ENCODE measurements at regions of chr9 and their contacts with region 1.

Region 1: GRCh38 chr9:35732122-35732799 is at the starts of genes CREB3 and TLN1:
- DNase-seq: peak; percentile 98
- ATAC-seq: peak; percentile 87
- H3K4me3 ChIP-seq: peak within 1 kb of the TSS; percentile 52 to 87 (median 82)
- H3K4me3 Mint-ChIP-seq: no peak within 1 kb of the TSS
- H3K27ac ChIP-seq: peak within 1 kb of the TSS; percentile 69 to 92
- H3K27ac Mint-ChIP-seq: peak within 1 kb of the TSS; percentile 96
- H3K4me1 ChIP-seq: peaks cover 53 to 61% of the 10 kb centered on the region in 2 donors
- H3K4me1 Mint-ChIP-seq: peaks cover 12% of the 10 kb centered on the region
- H3K27me3 ChIP-seq: no peaks in the 10 kb centered on the region
- H3K27me3 Mint-ChIP-seq: no peaks in the 10 kb centered on the region
- CTCF ChIP-seq: no peak
- total RNA-seq, gene CREB3: 18.1 and 20.7 TPM in 2 replicates
- total RNA-seq, gene TLN1: 272 and 280 TPM in 2 replicates

Region 2: DNA sequence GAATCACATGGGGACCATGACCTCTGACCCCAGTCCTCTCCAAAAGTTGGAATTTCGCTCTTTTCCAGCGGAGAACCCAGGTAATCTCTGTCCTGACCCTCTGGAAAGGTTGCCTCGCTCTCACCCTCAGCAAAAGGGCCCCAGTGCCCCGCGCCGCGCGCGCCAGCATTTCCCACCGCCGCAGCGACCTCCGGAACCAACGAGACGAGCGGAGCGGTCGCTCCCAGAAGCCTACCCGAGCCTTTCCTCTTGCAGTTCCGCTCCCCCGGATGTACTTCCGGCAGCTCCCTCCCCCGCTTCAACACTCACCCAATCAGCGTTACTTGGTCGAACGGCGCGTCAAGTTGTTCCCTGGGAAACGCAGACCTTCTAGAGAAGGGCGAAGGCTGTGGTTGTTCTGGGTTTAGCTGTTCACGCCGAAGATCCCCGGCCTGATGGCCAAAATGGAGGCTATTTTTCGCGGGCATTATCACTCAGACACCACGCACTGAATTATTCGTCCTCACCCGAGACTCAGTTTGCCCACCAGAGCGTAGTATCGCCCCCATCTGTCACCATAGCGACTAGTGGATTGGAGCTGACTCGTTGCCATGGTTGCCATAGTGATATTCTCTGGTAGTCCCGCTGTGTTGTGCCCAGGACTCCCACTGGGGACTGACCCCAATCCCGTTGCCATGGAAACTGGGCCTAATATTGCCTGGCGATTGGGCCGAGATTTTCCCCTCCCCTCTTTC is 629.2 kb before region 1 on chr9 and contains the start of gene STOML2:
- CTCF ChIA-PET with region 1: no interaction called
- POLR2A ChIA-PET with region 1: interaction called, 6 read pairs
- intact Hi-C with region 1: loop called (anchors 2 kb)
- DNase-seq: peak; percentile 95
- ATAC-seq: peak; percentile 95
- H3K4me3 ChIP-seq: peak within 1 kb of the TSS; percentile 61 to 94 (median 88)
- H3K4me3 Mint-ChIP-seq: peak within 1 kb of the TSS; percentile 86
- H3K27ac ChIP-seq: peak within 1 kb of the TSS; percentile 86 to 96
- H3K27ac Mint-ChIP-seq: peak within 1 kb of the TSS; percentile 97
- H3K4me1 ChIP-seq: peaks cover 13 to 22% of the 10 kb centered on the region in 2 donors
- H3K4me1 Mint-ChIP-seq: peaks cover 28% of the 10 kb centered on the region
- H3K27me3 ChIP-seq: no peaks in the 10 kb centered on the region
- H3K27me3 Mint-ChIP-seq: no peaks in the 10 kb centered on the region
- CTCF ChIP-seq: no peak
- total RNA-seq, gene STOML2: 52.1 and 58.9 TPM in 2 replicates

Region 3: GRCh38 chr9:35495984-35496383 is 236.3 kb before region 1 on chr9:
- CTCF ChIA-PET with region 1: no interaction called
- POLR2A ChIA-PET with region 1: no interaction called
- intact Hi-C with region 1: no loop called
- DNase-seq: no peak
- ATAC-seq: no peak
- H3K4me3 ChIP-seq: no peak overlapping the region
- H3K4me3 Mint-ChIP-seq: no peak overlapping the region
- H3K27ac ChIP-seq: no peak overlapping the region
- H3K27ac Mint-ChIP-seq: no peak overlapping the region
- H3K4me1 ChIP-seq: no peaks in the 10 kb centered on the region
- H3K4me1 Mint-ChIP-seq: peaks cover 2% of the 10 kb centered on the region
- H3K27me3 ChIP-seq: peaks cover 0 to 8% (median under 1%) of the 10 kb centered on the region in 4 experiments
- H3K27me3 Mint-ChIP-seq: peaks cover 18% of the 10 kb centered on the region
- CTCF ChIP-seq: no peak

Region 4: GRCh38 chr9:35646533-35647265 is 85.6 kb before region 1 on chr9:
- CTCF ChIA-PET with region 1: interaction called, 27 read pairs
- POLR2A ChIA-PET with region 1: interaction called, 15 read pairs
- intact Hi-C with region 1: loop called (anchors 1 kb)
- DNase-seq: peak; percentile 95
- ATAC-seq: peak; percentile 89
- H3K4me3 ChIP-seq: peak overlapping the region; percentile 76 to 90 (median 84)
- H3K4me3 Mint-ChIP-seq: peak overlapping the region; percentile 97
- H3K27ac ChIP-seq: peak overlapping the region; percentile 88 to 95
- H3K27ac Mint-ChIP-seq: peak overlapping the region; percentile 97
- H3K4me1 ChIP-seq: peaks cover 76 to 92% of the 10 kb centered on the region in 2 donors
- H3K4me1 Mint-ChIP-seq: peaks cover 81% of the 10 kb centered on the region
- H3K27me3 ChIP-seq: no peaks in the 10 kb centered on the region
- H3K27me3 Mint-ChIP-seq: no peaks in the 10 kb centered on the region
- CTCF ChIP-seq: peak; percentile 94

Region 5: DNA sequence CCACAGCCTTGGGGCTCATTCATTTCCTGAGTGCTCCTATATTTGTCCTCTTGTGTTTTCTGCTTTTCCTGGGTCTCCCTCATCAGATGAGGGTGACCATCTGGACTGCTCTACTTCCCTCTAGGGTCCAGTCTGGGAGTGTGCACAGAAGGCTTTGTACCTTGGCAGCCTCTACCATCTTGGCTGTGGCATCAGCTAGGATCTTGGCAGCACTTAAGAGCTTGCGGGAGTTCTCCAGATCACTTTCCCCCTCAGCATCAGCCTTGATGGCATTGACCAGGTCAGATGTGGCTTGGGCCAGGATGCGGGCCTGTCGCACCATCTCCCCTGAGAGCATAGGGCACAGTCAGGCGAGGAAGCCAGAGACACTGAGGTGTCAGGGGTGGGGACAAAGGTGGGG is 16.0 kb before region 1 on chr9:
- CTCF ChIA-PET with region 1: interaction called, 28 read pairs
- POLR2A ChIA-PET with region 1: interaction called, 21 read pairs
- intact Hi-C with region 1: loop called (anchors 1 kb)
- DNase-seq: no peak
- ATAC-seq: no peak
- H3K4me3 ChIP-seq: no peak overlapping the region
- H3K4me3 Mint-ChIP-seq: no peak overlapping the region
- H3K27ac ChIP-seq: no peak overlapping the region
- H3K27ac Mint-ChIP-seq: peak overlapping the region; percentile 65
- H3K4me1 ChIP-seq: peaks cover 16 to 24% of the 10 kb centered on the region in 2 donors
- H3K4me1 Mint-ChIP-seq: peaks cover 26% of the 10 kb centered on the region
- H3K27me3 ChIP-seq: no peaks in the 10 kb centered on the region
- H3K27me3 Mint-ChIP-seq: no peaks in the 10 kb centered on the region
- CTCF ChIP-seq: no peak

Region 6: DNA sequence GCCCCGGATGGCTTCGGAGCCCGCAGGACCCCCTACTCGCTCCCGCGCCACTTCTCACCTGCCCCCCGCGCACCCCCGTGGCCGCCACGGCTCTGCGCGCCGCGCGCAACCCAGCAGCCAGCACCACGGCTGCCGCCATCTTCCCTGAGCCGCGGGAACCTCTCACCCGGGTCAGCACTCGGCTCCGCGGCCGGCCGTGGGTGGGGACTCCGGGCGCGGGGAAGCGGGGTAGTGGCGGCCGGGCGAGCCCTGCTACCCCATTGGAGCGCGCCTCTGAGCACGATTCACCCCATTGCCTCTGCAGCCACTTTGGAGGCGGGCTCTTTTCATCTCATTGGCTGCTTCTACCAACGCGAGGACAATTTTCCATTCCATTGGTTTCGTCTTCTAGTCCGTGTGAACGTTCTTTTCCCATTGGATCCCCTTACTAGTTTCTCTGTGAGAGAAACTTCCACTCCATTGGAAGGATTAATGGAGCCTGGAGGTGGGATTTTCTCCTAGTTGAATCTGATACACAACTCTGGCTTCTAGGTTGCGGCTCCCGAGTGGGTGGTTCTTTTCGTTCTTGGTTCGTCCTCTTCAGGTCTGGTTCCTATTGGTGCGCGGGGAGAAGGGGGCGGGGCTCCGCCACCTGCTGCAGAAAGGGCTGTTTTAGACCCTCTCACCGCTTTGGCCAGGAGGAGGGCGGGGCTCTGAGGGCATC is 82.7 kb after region 1 on chr9 and contains the start of gene HINT2:
- CTCF ChIA-PET with region 1: interaction called, 22 read pairs
- POLR2A ChIA-PET with region 1: interaction called, 3 read pairs
- intact Hi-C with region 1: loop called (anchors 1 kb)
- DNase-seq: peak; percentile 98
- ATAC-seq: peak; percentile 82
- H3K4me3 ChIP-seq: peak within 1 kb of the TSS; percentile 61 to 96 (median 88)
- H3K4me3 Mint-ChIP-seq: peak within 1 kb of the TSS; percentile 97
- H3K27ac ChIP-seq: peak within 1 kb of the TSS; percentile 87 to 88
- H3K27ac Mint-ChIP-seq: peak within 1 kb of the TSS; percentile 98
- H3K4me1 ChIP-seq: peaks cover 26 to 33% of the 10 kb centered on the region in 2 donors
- H3K4me1 Mint-ChIP-seq: peaks cover 30% of the 10 kb centered on the region
- H3K27me3 ChIP-seq: no peaks in the 10 kb centered on the region
- H3K27me3 Mint-ChIP-seq: no peaks in the 10 kb centered on the region
- CTCF ChIP-seq: no peak
- total RNA-seq, gene HINT2: 29.7 and 31.9 TPM in 2 replicates

Region 7: DNA sequence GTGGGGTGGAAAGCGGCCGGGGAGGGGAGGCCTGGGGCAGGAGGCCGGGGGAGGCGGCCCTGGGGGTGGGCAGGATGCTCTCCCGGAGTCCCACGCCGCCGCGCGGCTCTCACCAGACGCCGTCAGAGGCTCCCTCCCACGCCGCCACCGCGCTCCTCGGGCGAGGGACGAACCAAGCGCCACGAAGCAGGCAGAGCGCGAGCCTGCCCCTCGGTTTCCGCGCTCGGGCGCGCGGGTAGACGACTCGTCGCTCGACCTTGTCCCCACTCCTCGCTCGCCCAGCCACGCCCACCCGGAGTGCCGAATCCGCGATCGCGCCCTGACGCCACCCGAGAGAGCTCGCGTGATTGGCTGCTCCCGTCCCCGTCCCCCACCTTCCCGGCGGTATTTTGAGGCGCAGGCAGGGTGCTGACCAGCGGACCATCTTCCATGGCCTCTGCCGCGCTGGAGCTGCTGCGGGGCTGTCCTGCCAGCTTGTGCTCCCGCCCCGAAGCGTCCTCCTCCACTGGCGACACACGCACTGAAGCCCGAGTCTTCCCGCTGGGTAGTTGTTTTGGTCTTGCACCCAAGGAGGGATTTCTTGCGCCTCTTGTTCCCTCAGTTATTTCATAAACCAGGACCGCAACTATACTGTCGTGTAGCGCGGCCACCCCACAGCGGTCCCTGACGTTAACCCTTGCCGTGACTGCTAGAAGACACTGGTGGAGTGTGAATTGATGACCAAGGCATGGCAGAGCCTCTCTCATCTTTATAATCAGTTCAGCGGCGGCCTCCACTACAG is 526.1 kb after region 1 on chr9 and contains the start of gene GNE:
- CTCF ChIA-PET with region 1: no interaction called
- POLR2A ChIA-PET with region 1: no interaction called
- intact Hi-C with region 1: loop called (anchors 2 kb)
- DNase-seq: peak; percentile 97
- ATAC-seq: peak; percentile 82
- H3K4me3 ChIP-seq: peak within 1 kb of the TSS; percentile 38 to 75 (median 68)
- H3K4me3 Mint-ChIP-seq: peak within 1 kb of the TSS; percentile 99
- H3K27ac ChIP-seq: peak within 1 kb of the TSS; percentile 87 to 94
- H3K27ac Mint-ChIP-seq: peak within 1 kb of the TSS; percentile 96
- H3K4me1 ChIP-seq: peaks cover 12 to 15% of the 10 kb centered on the region in 2 donors
- H3K4me1 Mint-ChIP-seq: peaks cover 17% of the 10 kb centered on the region
- H3K27me3 ChIP-seq: no peaks in the 10 kb centered on the region
- H3K27me3 Mint-ChIP-seq: no peaks in the 10 kb centered on the region
- CTCF ChIP-seq: no peak
- total RNA-seq, gene GNE: 20.6 and 21.6 TPM in 2 replicates

Measured in B cell (primary cell).